Activated T-helper 2 cell treated with anti-CD3 and anti-CD28 coated beads, Interferon-gamma antibody, Interleukin-2, Interleukin-4, amounts not matched to agents 10 μg/mL and 5 μg/mL and 100 μg/mL, durations not matched to agents 14 hours and 24 hours and 36 hours (primary cell): ENCODE measurements at regions of chr1 and their contacts with region 1.

Region 1: GRCh38 chr1:20185834-20186782 is at the starts of genes PLA2G2C and UBXN10:
- DNase-seq: peak; percentile 51
- H3K4me3 Mint-ChIP-seq: peak within 1 kb of the TSS; percentile 78
- H3K27ac Mint-ChIP-seq: peak within 1 kb of the TSS; percentile 82
- H3K4me1 Mint-ChIP-seq: peaks cover 39% of the 10 kb centered on the region
- H3K27me3 Mint-ChIP-seq: peaks cover 44% of the 10 kb centered on the region
- total RNA-seq, gene PLA2G2C: 0.30 TPM in 1 of 2 replicates, not detected in the other
- total RNA-seq, gene UBXN10: 0.32 and 0.39 TPM in 2 replicates

Region 2: GRCh38 chr1:20172033-20172590 is 14.0 kb before region 1 on chr1:
- intact Hi-C with region 1: loop called (anchors 2 kb)
- DNase-seq: no peak
- H3K4me3 Mint-ChIP-seq: no peak overlapping the region
- H3K27ac Mint-ChIP-seq: no peak overlapping the region
- H3K4me1 Mint-ChIP-seq: peaks cover 16% of the 10 kb centered on the region
- H3K27me3 Mint-ChIP-seq: peaks cover 6% of the 10 kb centered on the region

Region 3: DNA sequence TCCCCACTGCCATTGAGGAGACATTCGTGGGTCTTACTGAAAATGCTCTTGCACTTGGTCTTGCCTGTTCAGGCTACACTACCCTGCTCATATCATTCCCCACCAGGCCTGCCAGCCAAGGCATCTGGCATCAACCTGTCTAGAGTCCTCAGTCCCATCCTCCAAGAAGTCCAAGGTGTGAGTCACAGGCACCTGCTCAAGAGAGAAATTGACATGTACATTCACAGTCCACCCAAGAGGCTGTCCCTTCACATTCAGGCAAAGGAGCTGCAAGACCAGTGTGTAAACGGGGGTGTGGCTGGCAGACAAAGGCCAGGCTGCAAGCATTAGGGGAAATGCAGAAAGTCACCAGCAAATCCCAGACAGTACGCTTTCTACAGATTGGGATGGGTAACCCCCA is 13.3 kb after region 1 on chr1:
- intact Hi-C with region 1: no loop called
- DNase-seq: no peak
- H3K4me3 Mint-ChIP-seq: no peak overlapping the region
- H3K27ac Mint-ChIP-seq: no peak overlapping the region
- H3K4me1 Mint-ChIP-seq: no peaks in the 10 kb centered on the region
- H3K27me3 Mint-ChIP-seq: peaks cover 36% of the 10 kb centered on the region